Heart left ventricle (tissue), 16 donors: ENCODE measurements at regions of chr6 and their contacts with region 1.

Region 1: GRCh38 chr6:152642989-152643388 is 5.8 kb upstream of the SYNE1 start:
- DNase-seq: peak; percentile 63 to 73 (median 70)
- ATAC-seq: peak; percentile 73 to 96 (median 92)
- H3K4me3 ChIP-seq: no peak overlapping the region
- H3K27ac ChIP-seq: no peak overlapping the region
- H3K4me1 ChIP-seq: peaks cover 0 to 1% (median 0%) of the 10 kb centered on the region in 12 donors
- H3K27me3 ChIP-seq: peaks cover 0 to under 1% (median 0%) of the 10 kb centered on the region in 9 donors
- CTCF ChIP-seq: peak; percentile 44 to 80 (median 64)
- POLR2A ChIP-seq: no peak

Region 2: GRCh38 chr6:152474354-152474753 is 168.6 kb before region 1 on chr6:
- intact Hi-C with region 1: no loop called
- DNase-seq: no peak
- ATAC-seq: no peak
- H3K4me3 ChIP-seq: no peak overlapping the region
- H3K27ac ChIP-seq: no peak overlapping the region
- H3K4me1 ChIP-seq: no peaks in the 10 kb centered on the region
- H3K27me3 ChIP-seq: no peaks in the 10 kb centered on the region
- CTCF ChIP-seq: no peak
- POLR2A ChIP-seq: no peak

Region 3: GRCh38 chr6:152484806-152485205 is 158.2 kb before region 1 on chr6:
- intact Hi-C with region 1: loop called in 2 of 10 experiments (anchors 10 kb)
- DNase-seq: no peak
- ATAC-seq: no peak
- H3K4me3 ChIP-seq: no peak overlapping the region
- H3K27ac ChIP-seq: no peak overlapping the region
- H3K4me1 ChIP-seq: peaks cover 0 to 6% (median 0%) of the 10 kb centered on the region in 12 donors
- H3K27me3 ChIP-seq: no peaks in the 10 kb centered on the region
- CTCF ChIP-seq: no peak
- POLR2A ChIP-seq: no peak

Region 4: GRCh38 chr6:152696522-152696921 is 53.5 kb after region 1 on chr6:
- intact Hi-C with region 1: loop called in 1 of 10 experiments (anchors 5 kb)
- DNase-seq: no peak
- ATAC-seq: no peak
- H3K4me3 ChIP-seq: no peak overlapping the region
- H3K27ac ChIP-seq: peak overlapping the region in 11 of 12 donors; percentile 36 to 79 (median 68)
- H3K4me1 ChIP-seq: peaks cover 0 to 17% (median 0%) of the 10 kb centered on the region in 12 donors
- H3K27me3 ChIP-seq: no peaks in the 10 kb centered on the region
- CTCF ChIP-seq: no peak
- POLR2A ChIP-seq: no peak

Region 5: GRCh38 chr6:153048631-153049030 is 405.6 kb after region 1 on chr6:
- intact Hi-C with region 1: no loop called
- DNase-seq: no peak
- ATAC-seq: no peak
- H3K4me3 ChIP-seq: no peak overlapping the region
- H3K27ac ChIP-seq: no peak overlapping the region
- H3K4me1 ChIP-seq: no peaks in the 10 kb centered on the region
- H3K27me3 ChIP-seq: no peaks in the 10 kb centered on the region
- CTCF ChIP-seq: no peak
- POLR2A ChIP-seq: no peak